ENCODE measurements at regions of chr7 and their contacts with region 1.

Region 1: GRCh38 chr7:130242198-130243014 is 24.3 kb upstream of the CPA2 start:
- DNase-seq: peak; percentile 88
- H3K4me3 ChIP-seq: no peak overlapping the region
- H3K27ac ChIP-seq: no peak overlapping the region
- H3K4me1 ChIP-seq: peaks cover 13% of the 10 kb centered on the region
- H3K27me3 ChIP-seq: no peaks in the 10 kb centered on the region

Region 2: DNA sequence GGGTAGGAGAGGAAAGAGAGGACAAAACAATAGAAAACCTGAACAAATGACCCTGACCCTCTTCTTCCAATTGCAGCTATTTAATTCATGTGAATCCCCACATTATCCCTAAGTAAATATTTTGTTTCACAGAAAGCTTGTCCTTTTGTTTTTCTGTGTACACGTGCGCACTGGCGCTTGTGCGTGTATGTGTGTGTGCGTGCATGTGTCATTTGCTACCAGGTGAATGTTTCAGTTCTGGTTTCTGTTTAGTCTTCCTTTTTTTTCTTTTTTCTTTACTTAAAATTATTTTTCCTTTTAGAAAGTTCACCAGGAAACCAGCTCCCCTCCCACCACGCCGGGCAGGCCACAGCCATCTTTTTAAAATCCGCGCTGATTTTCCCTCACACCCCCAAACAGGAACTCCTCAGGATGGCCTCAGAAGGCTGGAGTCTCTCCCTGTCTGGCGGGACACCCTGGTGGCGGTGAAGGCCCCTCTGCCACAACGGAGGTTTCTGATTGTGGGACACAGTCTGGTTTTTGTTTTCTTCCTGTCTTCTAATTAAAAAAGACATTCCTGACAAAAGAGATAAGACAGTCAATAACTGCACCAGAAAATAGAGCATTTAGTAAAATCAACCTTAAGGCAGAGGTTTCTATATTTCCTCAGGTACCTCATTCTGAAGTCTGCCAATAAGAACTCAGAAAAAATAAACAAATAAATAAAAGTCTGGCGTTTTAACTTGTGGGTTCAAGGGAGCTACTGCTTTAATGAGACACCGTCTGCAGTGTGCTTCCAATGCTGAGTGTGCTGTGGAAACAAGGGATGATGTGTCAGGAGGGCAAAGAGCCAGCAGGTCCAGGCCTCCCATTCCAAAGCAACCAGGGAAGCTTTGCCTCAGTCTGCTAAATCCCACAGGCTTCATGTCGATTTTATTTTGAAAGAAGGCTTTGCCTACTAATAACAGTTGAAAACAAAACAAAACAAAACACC is 1287.3 kb before region 1 on chr7:
- in situ Hi-C with region 1: no loop called
- DNase-seq: peak; percentile 86
- H3K4me3 ChIP-seq: no peak overlapping the region
- H3K27ac ChIP-seq: 0 out of 2 replicates have a peak overlapping the region, but pooled peaks have one; percentile 14
- H3K4me1 ChIP-seq: 0 out of 2 replicates have a peak, but pooled peaks cover 8% of the 10 kb centered on the region
- H3K27me3 ChIP-seq: no peaks in the 10 kb centered on the region

Region 3: DNA sequence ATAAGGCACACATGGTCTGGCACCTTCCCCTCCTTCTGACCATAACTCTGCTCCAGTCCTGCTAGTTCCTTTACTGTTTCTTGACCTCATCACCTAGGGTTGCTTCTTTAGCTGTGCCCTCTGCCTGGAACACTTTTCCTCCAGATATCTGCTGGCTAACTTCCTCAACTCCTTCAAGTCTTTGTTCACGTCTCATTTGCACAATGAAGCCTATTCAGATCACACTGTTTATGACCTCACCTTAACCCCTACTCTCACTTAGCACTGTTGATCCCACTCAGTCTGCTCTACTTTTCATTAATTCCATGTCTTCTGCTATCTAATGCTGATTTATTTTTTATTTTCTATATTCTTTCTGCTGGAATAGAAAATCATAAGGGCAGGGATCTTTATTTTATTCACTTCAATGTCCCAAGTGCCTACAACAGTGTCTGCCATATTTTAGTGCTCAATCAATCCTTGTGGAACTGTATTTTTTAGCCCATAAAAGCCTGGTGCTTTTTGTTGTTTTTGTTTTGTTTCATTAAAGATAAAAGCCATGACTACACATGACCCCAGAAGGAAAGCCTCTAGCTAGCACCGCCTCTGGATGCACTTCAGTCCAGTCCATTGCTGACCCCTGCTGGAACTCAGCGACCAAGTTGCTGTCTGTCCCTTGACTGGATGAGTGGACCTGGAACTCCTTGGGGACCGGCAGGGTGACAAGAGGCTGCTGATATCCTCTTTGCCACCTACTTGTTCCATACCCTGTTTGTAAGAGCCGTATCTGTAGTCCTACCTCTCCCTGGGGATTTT is 479.3 kb after region 1 on chr7:
- in situ Hi-C with region 1: loop called (anchors 25 kb)
- DNase-seq: peak; percentile 84
- H3K4me3 ChIP-seq: no peak overlapping the region
- H3K27ac ChIP-seq: no peak overlapping the region
- H3K4me1 ChIP-seq: no peaks in the 10 kb centered on the region
- H3K27me3 ChIP-seq: 0 out of 2 replicates have a peak, but pooled peaks cover 8% of the 10 kb centered on the region

Region 4: GRCh38 chr7:131409129-131409766 is 1166.8 kb after region 1 on chr7:
- in situ Hi-C with region 1: no loop called
- DNase-seq: no peak
- H3K4me3 ChIP-seq: no peak overlapping the region
- H3K27ac ChIP-seq: no peak overlapping the region
- H3K4me1 ChIP-seq: no peaks in the 10 kb centered on the region
- H3K27me3 ChIP-seq: no peaks in the 10 kb centered on the region